Activated CD4-positive, alpha-beta T cell treated with anti-CD3 and anti-CD28 coated beads for 36 hours (primary cell): ENCODE measurements at regions of chr6 and their contacts with region 1.

Region 1: DNA sequence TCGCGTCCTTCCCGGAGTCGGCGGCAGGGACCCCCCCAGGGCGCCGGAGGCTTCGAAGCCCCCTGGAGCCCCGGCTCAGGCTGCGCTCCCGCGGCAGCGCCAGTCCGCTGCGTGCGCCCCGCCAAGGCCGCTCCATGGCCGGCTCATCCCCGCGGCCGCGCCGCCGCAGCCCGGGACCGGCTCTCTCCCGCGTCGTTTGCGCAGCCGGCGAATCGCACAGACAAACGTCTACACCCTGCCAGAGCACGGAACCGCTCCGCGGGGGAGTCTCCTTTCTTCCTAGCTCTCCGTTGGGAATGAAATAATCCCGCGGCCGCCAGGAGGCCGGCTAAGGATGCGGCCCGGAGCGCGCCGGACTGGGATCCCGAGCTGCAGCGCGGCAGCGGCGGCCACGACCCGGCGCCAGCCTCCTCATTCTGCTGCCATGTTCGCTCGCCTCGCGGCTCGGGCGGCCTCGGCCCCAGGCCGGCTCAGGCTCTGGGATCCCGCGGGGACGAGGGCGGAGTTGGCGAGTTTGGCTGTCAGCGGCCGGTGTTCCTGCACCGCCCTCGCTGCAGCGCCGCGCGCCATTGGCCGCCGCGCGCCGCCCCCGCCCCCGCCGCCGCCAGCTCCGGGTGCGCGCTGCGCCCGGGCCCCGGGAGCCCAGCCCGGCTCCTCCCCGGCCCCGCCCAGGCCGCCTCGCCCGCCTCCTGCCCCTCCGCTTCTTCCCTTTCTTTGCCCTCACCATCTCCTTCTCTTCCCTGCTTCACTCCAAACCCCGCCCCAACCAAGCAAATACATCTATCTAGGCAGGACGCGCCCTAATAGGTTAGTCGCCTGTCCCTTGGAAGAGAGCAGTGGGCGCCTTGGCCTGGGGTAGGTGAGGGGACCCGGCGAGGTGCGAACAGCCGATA is at the start of gene GFOD1:
- DNase-seq: peak; percentile 87
- ATAC-seq: peak; percentile 83
- H3K4me3 Mint-ChIP-seq: peak within 1 kb of the TSS; percentile 83
- H3K27ac Mint-ChIP-seq: peak within 1 kb of the TSS; percentile 74
- H3K4me1 Mint-ChIP-seq: peaks cover 36% of the 10 kb centered on the region
- H3K27me3 Mint-ChIP-seq: peaks cover 8% of the 10 kb centered on the region
- total RNA-seq, gene GFOD1: 4.2 to 5.8 TPM

Region 2: GRCh38 chr6:13336553-13336952 is 150.8 kb before region 1 on chr6:
- CTCF ChIA-PET with region 1: interaction called, 5 read pairs
- POLR2A ChIA-PET with region 1: interaction called, 3 read pairs
- intact Hi-C with region 1: loop called in 1 of 2 experiments (anchors 1 kb)
- DNase-seq: peak; percentile 87
- ATAC-seq: peak; percentile 69
- H3K4me3 Mint-ChIP-seq: no peak overlapping the region
- H3K27ac Mint-ChIP-seq: no peak overlapping the region
- H3K4me1 Mint-ChIP-seq: peaks cover 10% of the 10 kb centered on the region
- H3K27me3 Mint-ChIP-seq: no peaks in the 10 kb centered on the region

Region 3: GRCh38 chr6:13454286-13455221 is 32.8 kb before region 1 on chr6:
- CTCF ChIA-PET with region 1: interaction called, 3 read pairs
- POLR2A ChIA-PET with region 1: no interaction called
- intact Hi-C with region 1: loop called (anchors 1 kb)
- DNase-seq: peak; percentile 88
- ATAC-seq: peak; percentile 66
- H3K4me3 Mint-ChIP-seq: peak overlapping the region; percentile 36
- H3K27ac Mint-ChIP-seq: peak overlapping the region; percentile 95
- H3K4me1 Mint-ChIP-seq: peaks cover 63% of the 10 kb centered on the region
- H3K27me3 Mint-ChIP-seq: no peaks in the 10 kb centered on the region

Region 4: DNA sequence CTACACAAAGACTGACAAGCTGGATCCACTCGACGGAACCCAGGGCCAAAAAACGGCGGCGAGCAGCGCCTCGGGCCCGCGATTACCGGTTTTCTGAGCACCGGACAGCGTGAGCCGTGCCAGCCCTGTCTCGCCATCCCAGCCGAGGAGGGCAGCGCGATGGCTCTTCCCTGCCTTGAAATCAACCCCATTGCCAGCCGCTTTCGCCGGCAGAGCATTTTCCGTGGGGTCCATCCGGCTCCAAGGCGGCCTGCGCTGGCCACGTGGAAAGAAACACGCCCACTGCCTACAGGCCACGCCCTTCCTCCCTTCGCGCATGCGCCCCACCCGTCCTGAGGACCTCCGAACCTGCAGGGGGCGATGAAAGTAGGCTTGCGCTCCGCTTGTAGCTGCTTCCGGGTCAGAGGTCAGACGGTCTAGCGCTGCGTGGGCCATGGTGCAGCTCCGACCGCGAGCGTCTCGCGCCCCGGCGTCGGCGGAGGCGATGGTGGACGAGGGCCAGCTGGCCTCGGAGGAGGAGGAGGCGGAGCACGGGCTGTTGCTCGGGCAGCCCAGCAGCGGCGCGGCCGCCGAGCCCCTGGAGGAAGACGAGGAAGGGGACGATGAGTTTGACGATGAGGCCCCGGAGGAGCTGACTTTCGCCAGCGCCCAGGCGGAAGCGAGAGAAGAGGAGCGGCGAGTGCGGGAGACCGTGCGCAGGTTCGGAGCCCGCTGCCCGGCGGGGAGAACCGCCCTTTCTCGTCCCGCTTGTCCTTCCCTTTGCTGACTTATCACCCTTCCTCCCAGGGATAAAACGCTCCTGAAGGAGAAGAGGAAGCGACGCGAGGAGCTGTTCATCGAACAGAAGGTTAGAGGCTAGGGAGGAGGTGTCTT is 127.8 kb after region 1 on chr6 and contains the start of gene NOL7:
- CTCF ChIA-PET with region 1: no interaction called
- POLR2A ChIA-PET with region 1: no interaction called
- intact Hi-C with region 1: loop called in 1 of 2 experiments (anchors 1 kb)
- DNase-seq: peak; percentile 99
- ATAC-seq: peak; percentile 92
- H3K4me3 Mint-ChIP-seq: peak within 1 kb of the TSS; percentile 92
- H3K27ac Mint-ChIP-seq: peak within 1 kb of the TSS; percentile 90
- H3K4me1 Mint-ChIP-seq: peaks cover 44% of the 10 kb centered on the region
- H3K27me3 Mint-ChIP-seq: no peaks in the 10 kb centered on the region
- total RNA-seq, gene NOL7: 92.8 to 97.3 TPM

Region 5: GRCh38 chr6:13803581-13803980 is 316.2 kb after region 1 on chr6:
- CTCF ChIA-PET with region 1: no interaction called
- POLR2A ChIA-PET with region 1: no interaction called
- intact Hi-C with region 1: no loop called
- DNase-seq: no peak
- ATAC-seq: no peak
- H3K4me3 Mint-ChIP-seq: no peak overlapping the region
- H3K27ac Mint-ChIP-seq: no peak overlapping the region
- H3K4me1 Mint-ChIP-seq: no peaks in the 10 kb centered on the region
- H3K27me3 Mint-ChIP-seq: no peaks in the 10 kb centered on the region